Ascending aorta (tissue), 2 donors: ENCODE measurements at regions of chr20 and their contacts with region 1.

Region 1: DNA sequence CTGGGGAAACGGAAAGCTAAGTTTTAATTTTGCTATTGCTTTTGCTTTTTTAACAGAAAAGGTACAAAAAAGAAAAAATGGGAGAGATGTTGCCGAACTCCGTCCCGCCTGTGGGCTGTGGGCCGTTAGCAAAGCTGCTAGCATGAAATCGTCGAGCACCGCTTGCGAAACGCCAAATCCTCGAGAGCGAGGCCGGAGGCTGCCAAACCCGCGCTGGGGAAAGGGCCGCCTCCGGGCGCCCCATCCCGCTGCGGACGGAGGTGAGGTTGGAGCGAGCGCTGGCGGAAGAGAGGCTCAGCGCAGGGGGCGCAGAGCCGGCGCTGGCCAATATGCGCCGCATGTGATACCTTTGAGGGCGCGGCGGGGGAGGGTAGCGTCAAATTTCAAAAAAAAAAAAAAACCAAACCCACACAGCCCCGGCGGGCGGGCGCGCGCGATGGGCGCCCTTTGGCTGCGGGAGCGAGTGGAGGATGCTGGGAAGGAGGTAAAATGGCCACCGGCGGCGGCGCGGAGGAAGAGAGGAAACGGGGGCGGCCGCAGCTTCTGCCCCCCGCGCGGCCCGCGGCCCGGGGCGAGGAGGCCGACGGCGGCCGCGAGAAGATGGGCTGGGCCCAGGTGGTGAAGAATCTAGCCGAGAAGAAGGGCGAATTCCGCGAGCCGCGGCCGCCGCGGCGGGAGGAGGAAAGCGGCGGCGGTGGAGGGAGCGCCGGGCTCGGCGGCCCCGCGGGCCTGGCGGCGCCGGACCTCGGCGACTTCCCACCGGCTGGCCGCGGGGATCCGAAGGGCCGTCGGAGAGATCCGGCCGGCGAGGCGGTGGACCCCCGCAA is at the start of gene ZCCHC3:
- DNase-seq: peak; percentile 62 to 91
- H3K4me3 ChIP-seq: peak within 1 kb of the TSS; percentile 74 to 86
- H3K27ac ChIP-seq: peak within 1 kb of the TSS; percentile 95 to 97
- H3K4me1 ChIP-seq: peaks cover 0 to 19% of the 10 kb centered on the region in 2 donors
- H3K27me3 ChIP-seq: no peaks in the 10 kb centered on the region
- CTCF ChIP-seq: peak in 1 of 3 experiments; percentile 18
- total RNA-seq, gene ZCCHC3: 15.6 TPM

Region 2: DNA sequence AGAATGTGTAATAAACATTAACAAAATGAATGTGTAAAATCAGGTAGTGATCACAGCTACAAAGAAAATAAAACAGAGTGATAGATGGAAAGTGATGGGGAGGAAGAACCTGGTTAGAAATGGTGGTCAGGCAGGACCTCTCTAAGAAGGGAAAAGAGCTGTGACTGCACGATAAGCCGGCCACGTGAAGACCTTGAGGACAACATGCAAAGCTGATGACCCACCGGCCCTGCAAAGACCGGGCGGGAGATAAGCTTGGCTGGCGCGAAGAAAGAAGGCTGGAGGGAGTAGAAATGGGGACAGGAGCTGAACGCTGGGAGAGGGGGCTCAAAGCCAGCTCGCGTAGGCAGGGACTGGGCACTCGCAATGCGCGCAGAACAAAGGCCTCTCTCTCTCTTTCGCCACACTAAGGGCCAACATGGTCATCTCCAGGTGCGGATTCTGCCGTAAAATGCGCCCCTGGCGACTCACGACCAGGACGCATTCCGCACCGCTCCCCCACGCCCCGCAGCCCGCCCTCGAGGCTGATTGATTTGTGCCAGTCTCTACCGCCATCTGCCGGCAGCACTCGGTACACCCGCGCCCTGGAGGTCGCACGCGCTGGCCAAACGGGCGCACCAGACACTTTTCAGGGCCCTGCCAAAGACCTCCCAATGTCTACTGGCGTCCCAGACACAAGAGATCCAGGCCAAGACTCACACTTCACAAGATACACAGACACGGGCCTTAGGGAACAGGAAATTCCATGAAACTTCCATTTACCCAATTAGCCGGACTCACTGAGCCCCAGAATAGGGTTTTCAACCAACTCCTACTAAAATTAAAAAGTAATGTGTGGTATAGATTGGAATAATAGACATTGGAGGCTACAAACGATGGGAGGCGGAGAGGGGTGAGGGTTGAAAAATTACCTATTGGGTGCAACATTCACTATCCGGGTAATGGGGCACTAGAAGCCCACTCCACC is 30.4 kb before region 1 on chr20:
- intact Hi-C with region 1: loop called (anchors 2 kb)
- DNase-seq: peak; percentile 29 to 91
- H3K4me3 ChIP-seq: peak overlapping the region; percentile 52 to 69
- H3K27ac ChIP-seq: no peak overlapping the region
- H3K4me1 ChIP-seq: no peaks in the 10 kb centered on the region
- H3K27me3 ChIP-seq: no peaks in the 10 kb centered on the region
- CTCF ChIP-seq: peak; percentile 89 to 97 (median 94)

Region 3: GRCh38 chr20:309841-310644 is 12.7 kb after region 1 on chr20:
- intact Hi-C with region 1: loop called (anchors 1 kb)
- DNase-seq: peak; percentile 97 to 99
- H3K4me3 ChIP-seq: peak overlapping the region; percentile 50 to 66
- H3K27ac ChIP-seq: peak overlapping the region; percentile 89 to 95
- H3K4me1 ChIP-seq: no peaks in the 10 kb centered on the region
- H3K27me3 ChIP-seq: no peaks in the 10 kb centered on the region
- CTCF ChIP-seq: no peak

Region 4: GRCh38 chr20:347640-348484 is 50.6 kb after region 1 on chr20:
- intact Hi-C with region 1: loop called (anchors 2 kb)
- DNase-seq: peak; percentile 55 to 93
- H3K4me3 ChIP-seq: peak overlapping the region; percentile 67 to 83
- H3K27ac ChIP-seq: peak overlapping the region; percentile 84 to 90
- H3K4me1 ChIP-seq: peaks cover 0 to 6% of the 10 kb centered on the region in 2 donors
- H3K27me3 ChIP-seq: no peaks in the 10 kb centered on the region
- CTCF ChIP-seq: no peak

Region 5: GRCh38 chr20:419556-420168 is 122.4 kb after region 1 on chr20:
- intact Hi-C with region 1: no loop called
- DNase-seq: no peak
- H3K4me3 ChIP-seq: no peak overlapping the region
- H3K27ac ChIP-seq: no peak overlapping the region
- H3K4me1 ChIP-seq: no peaks in the 10 kb centered on the region
- H3K27me3 ChIP-seq: no peaks in the 10 kb centered on the region
- CTCF ChIP-seq: no peak